Adrenal gland (tissue), 19 donors: ENCODE measurements at regions of chr11 and their contacts with region 1.

Region 1: GRCh38 chr11:114959953-114960505 is 281.7 kb downstream of the NXPE2 start:
- DNase-seq: no peak
- H3K4me3 ChIP-seq: no peak overlapping the region
- H3K27ac ChIP-seq: no peak overlapping the region
- H3K4me1 ChIP-seq: no peaks in the 10 kb centered on the region
- H3K27me3 ChIP-seq: no peaks in the 10 kb centered on the region
- CTCF ChIP-seq: no peak
- POLR2A ChIP-seq: no peak

Region 2: DNA sequence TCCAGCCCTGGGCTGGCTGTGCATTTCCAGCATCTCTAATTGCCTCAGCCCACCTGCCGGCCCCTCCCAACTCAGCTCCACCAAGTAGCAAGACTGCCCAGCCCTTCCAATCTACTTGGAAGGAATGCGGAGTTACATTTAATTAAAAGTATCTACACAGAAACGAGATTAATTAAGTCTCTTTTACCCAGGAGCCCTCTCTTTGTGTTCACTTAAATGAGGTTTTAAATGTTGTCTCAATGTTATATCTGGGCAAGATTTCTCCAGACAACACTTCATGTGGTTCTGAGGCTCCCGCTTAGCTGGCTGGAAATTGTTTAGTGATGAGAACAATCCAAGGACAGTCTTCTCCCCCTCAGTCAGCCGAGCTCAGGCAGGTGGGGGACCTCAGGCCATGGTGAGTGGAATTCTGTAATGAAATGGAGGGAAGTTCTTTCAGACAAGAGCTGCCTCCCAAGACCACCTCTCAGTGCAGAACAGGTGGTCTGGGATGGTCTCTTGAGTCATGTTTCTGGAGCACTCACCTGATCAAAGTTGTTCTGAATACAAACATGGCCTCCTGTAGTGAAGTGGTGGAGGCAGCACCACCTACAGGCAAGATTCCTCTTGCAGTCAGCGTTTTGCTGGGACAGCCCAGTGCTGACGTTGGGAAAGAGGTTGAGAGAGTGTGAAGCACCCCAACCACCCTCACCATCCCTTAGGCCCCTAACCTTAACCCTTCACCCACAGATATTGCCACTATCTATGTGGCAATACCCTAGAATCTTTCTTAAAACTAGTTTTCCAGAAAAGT is 172.6 kb after region 1 on chr11:
- intact Hi-C with region 1: loop called in 1 of 2 experiments (anchors 5 kb)
- DNase-seq: peak in 5 of 7 donors; percentile 22 to 54 (median 32)
- H3K4me3 ChIP-seq: no peak overlapping the region
- H3K27ac ChIP-seq: no peak overlapping the region
- H3K4me1 ChIP-seq: no peaks in the 10 kb centered on the region
- H3K27me3 ChIP-seq: peaks cover 2% of the 10 kb centered on the region
- CTCF ChIP-seq: peak in 3 of 6 experiments; percentile 25 to 40 (median 40)
- POLR2A ChIP-seq: no peak